Activated CD4-positive, alpha-beta T cell treated with anti-CD3 and anti-CD28 coated beads, Interleukin-2, amount 10 ng/mL, durations not matched to agents 24 days and 14 days (primary cell): ENCODE measurements at regions of chr11 and their contacts with region 1.

Region 1: DNA sequence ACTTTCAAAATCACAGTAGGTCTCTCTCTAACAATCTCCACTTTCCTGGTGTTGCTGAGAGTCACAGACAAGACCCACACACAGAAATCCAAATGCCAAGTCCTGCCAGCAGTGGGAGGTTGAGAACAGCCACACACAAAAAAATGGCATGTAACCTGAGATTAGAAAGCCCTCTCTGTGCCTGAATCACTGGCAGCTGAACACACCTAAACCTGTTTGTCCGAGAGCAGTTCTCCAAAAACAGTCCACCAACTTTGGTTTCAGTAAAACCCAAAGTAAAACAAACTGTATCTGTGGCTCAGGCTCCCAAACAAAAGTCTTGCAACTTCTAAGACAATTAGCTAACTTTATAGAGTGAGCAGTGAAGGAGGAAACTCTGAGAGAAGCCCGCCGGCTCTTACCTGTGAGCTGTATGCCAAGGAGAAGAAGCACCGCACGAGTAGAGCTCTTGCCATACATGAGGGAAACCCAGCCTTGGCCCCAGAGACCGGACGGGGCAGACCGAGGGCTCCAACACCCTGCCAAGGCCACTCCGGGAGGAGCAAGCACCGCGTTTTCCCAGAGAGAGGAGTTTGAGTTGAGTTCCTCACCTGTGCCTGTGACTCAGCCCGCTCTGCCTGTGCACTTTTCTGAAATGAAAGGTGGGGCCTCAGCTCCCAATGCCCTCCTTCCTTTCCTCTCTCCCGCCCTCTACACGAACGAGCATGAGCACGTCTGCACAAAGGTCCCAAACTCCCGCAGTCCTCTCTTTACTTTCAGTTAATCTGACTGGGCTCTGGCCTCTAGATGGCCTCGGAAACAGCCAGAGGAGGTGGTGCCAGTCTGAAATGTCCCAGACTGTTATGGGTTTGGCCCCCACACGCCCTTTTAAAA is at the start of gene MPZL2:
- DNase-seq: peak; percentile 73
- H3K4me3 Mint-ChIP-seq: peak within 1 kb of the TSS; percentile 82
- H3K27ac Mint-ChIP-seq: peak within 1 kb of the TSS; percentile 68
- H3K4me1 Mint-ChIP-seq: peaks cover 40% of the 10 kb centered on the region
- H3K27me3 Mint-ChIP-seq: peaks cover 5% of the 10 kb centered on the region
- total RNA-seq, gene MPZL2: 18.5 and 19.3 TPM in 2 replicates

Region 2: GRCh38 chr11:118277306-118277705 is 13.4 kb after region 1 on chr11:
- intact Hi-C with region 1: loop called (anchors 2 kb)
- DNase-seq: peak; percentile 70
- H3K4me3 Mint-ChIP-seq: no peak overlapping the region
- H3K27ac Mint-ChIP-seq: peak overlapping the region; percentile 36
- H3K4me1 Mint-ChIP-seq: peaks cover 41% of the 10 kb centered on the region
- H3K27me3 Mint-ChIP-seq: no peaks in the 10 kb centered on the region